ENCODE measurements at regions of chr1 and their contacts with region 1.

Region 1: GRCh38 chr1:10796019-10796944 is at the start of gene CASZ1:
- DNase-seq: peak in 1 of 2 donors; percentile 83
- H3K4me3 ChIP-seq: peak within 1 kb of the TSS; percentile 65 to 74
- H3K27ac ChIP-seq: peak within 1 kb of the TSS in 1 of 2 donors; percentile 46
- H3K4me1 ChIP-seq: peaks cover 6 to 28% of the 10 kb centered on the region in 2 donors
- H3K27me3 ChIP-seq: no peaks in the 10 kb centered on the region
- CTCF ChIP-seq: no peak
- total RNA-seq, gene CASZ1: 25.8 TPM

Region 2: GRCh38 chr1:10507111-10507879 is 289.0 kb before region 1 on chr1:
- intact Hi-C with region 1: loop called (anchors 5 kb)
- DNase-seq: peak in 1 of 2 donors; percentile 84
- H3K4me3 ChIP-seq: peak overlapping the region in 1 of 2 donors; percentile 14
- H3K27ac ChIP-seq: no peak overlapping the region
- H3K4me1 ChIP-seq: peaks cover 13 to 16% of the 10 kb centered on the region in 2 donors
- H3K27me3 ChIP-seq: no peaks in the 10 kb centered on the region
- CTCF ChIP-seq: peak; percentile 76 to 94 (median 85)

Region 3: GRCh38 chr1:10635085-10635896 is 161.0 kb before region 1 on chr1:
- intact Hi-C with region 1: loop called (anchors 5 kb)
- DNase-seq: peak in 1 of 2 donors; percentile 83
- H3K4me3 ChIP-seq: peak overlapping the region in 1 of 2 donors; percentile 18
- H3K27ac ChIP-seq: peak overlapping the region; percentile 97 to 99
- H3K4me1 ChIP-seq: peaks cover 35 to 65% of the 10 kb centered on the region in 2 donors
- H3K27me3 ChIP-seq: no peaks in the 10 kb centered on the region
- CTCF ChIP-seq: no peak

Region 4: DNA sequence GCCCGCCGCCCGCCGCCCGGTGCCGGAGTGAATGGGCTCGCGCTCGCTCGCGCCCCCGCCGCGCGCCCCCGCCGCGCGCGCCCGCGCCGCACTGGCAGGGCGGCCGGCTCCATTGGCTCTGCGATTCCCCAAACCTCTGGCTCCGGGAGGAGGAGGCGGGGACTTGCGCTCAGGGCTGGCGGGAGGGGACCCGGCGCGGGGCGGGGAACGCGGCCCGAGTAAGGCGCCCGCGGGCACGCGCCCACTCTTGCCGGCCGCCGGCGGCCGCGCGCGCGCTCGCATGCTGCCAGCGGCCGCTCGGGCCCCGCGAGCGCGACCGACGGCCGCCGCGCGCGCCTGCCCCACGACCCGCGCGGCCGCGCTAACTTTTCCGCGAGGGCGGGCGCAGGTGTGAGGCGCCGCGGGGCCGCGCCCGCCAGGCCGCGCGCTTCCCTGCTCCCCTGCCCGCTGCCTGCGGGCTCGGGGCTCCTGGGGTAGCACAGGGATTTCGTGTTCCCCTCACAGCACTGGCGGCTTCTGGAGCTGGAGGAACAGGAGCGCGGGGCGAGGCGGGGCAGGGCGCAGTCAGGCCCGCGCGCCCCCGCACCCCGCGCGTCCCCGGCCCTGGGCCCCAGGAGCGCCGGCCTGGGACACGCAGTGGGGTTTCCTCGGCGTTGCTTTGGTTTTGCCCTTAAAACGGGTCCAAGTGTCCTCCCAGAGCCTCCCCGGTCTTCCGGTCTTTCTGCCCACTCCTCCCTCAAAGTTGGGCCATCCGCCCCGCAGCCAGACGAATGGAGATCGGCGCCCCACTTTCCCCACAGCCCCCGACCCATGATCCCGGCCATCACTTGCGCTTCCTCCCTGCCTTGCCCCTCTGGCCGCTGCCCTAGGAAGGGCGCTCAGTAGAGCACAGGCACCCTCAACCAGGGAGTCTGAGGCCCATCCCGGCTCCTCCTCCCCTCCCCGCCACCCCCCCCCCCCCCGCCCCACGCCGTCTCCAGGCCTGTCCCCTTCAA is 101.4 kb before region 1 on chr1:
- intact Hi-C with region 1: loop called (anchors 5 kb)
- DNase-seq: peak; percentile 43 to 96
- H3K4me3 ChIP-seq: peak overlapping the region; percentile 72 to 80
- H3K27ac ChIP-seq: peak overlapping the region; percentile 34 to 83
- H3K4me1 ChIP-seq: peaks cover 0 to 26% of the 10 kb centered on the region in 2 donors
- H3K27me3 ChIP-seq: no peaks in the 10 kb centered on the region
- CTCF ChIP-seq: no peak

Region 5: DNA sequence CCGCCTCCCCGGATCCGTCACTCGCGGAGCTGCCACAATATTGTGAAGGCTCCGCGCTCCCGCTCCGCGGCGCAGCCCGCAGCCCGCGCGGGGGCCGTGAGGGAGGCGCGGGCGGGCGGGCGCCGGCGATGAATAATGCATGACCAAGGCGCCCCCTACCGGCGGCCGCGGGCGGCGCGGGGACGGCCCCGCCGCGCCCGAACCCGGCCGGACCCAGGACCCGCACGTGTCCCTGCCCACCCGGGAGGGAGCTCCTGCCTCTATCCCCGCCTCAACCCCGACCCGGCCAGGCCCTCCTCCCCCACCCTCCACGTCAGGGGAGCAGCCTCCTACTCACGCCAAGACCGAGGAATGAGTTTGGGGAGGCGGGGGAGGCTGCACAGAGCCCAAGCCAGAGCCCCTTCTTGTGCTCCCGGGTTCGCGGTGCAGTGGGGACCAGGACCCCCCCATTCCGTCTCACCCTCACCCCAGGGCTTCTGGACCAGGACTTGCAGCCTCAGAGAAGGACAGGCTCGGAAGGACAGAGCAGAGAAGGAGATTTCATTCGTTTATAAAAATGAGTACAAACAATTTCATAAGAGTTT is 70.9 kb after region 1 on chr1:
- intact Hi-C with region 1: loop called (anchors 2 kb)
- DNase-seq: peak in 1 of 2 donors; percentile 75
- H3K4me3 ChIP-seq: peak overlapping the region; percentile 54 to 72
- H3K27ac ChIP-seq: no peak overlapping the region
- H3K4me1 ChIP-seq: peaks cover 4% of the 10 kb centered on the region in 2 donors
- H3K27me3 ChIP-seq: peaks cover 4% of the 10 kb centered on the region
- CTCF ChIP-seq: peak; percentile 14 to 93 (median 46)

Region 6: DNA sequence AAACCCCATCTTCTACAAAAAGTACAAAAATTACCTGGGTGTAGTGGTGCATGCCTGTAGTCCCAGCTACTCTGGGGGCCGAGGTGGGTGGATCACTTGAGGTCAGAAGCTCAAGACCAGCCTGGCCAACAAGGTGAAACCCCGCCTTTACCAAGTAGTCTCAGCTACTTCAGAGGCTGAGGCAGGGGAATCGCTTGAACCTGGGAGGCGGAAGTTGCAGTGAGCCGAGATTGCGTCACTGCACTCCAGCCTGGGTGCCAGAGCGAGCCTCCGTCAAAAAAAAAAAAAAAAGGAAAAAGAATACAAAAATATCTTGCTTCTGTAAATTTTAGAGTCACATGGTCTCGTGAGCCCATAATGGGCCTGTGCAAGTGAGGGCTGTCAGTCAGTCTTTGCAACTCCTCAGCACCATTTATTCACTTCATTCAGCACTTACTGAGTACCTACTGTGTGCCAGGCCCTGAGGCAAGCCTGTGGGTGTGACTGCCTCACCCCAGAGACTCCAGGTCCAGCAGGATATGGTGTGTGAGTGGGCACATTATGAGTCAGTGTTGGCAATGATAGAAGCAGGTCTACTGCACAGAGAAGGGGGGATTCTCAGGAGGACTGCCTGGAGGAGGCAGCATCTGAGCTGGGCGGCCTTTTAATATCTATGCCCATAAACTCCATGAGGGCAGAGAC is 169.4 kb after region 1 on chr1:
- intact Hi-C with region 1: no loop called
- DNase-seq: no peak
- H3K4me3 ChIP-seq: no peak overlapping the region
- H3K27ac ChIP-seq: no peak overlapping the region
- H3K4me1 ChIP-seq: no peaks in the 10 kb centered on the region
- H3K27me3 ChIP-seq: no peaks in the 10 kb centered on the region
- CTCF ChIP-seq: no peak

Measured in ascending aorta (tissue), 2 donors.